Panc1 (cell line): ENCODE measurements at regions of chr6 and their contacts with region 1.

Region 1: DNA sequence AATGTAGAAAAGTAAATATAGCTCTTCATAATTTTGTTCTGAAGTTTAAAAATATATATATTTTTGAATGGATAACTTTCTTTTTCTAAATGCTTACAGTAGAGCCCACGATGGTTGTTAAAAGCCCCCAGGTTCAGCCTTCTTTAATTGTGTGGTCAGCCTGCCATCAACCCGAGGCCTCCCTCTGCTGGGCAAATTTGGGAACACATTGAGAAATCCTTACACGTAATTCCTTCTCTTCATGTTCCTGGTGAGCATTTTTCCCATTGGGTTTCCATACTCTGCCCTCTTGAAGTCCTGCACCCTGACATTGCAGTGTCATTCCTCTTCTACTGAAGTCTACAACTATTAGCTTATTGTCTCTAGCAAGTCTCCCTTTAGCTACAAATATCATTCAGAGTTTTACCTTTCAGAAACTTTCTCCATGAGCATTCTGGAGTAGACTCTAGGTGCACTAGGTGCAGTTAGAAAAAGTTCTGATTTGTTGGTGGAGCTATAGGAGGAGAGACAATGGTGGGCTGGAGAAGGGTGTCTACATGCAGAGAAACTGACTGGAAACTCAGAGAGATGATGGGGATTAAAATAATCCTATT is 40.6 kb downstream of the TRIM38 start:
- DNase-seq: peak; percentile 38
- ATAC-seq: peak; percentile 86
- H3K4me3 ChIP-seq: no peak overlapping the region
- H3K27ac ChIP-seq: no peak overlapping the region
- H3K4me1 ChIP-seq: no peaks in the 10 kb centered on the region
- H3K27me3 ChIP-seq: no peaks in the 10 kb centered on the region
- CTCF ChIP-seq: peak; percentile 93

Region 2: GRCh38 chr6:25788305-25788922 is 214.8 kb before region 1 on chr6:
- CTCF ChIA-PET with region 1: interaction called, 3 read pairs
- POLR2A ChIA-PET with region 1: no interaction called
- in situ Hi-C with region 1: no loop called
- intact Hi-C with region 1: loop called (anchors 10 kb)
- DNase-seq: peak; percentile 28
- ATAC-seq: peak; percentile 79
- H3K4me3 ChIP-seq: no peak overlapping the region
- H3K27ac ChIP-seq: no peak overlapping the region
- H3K4me1 ChIP-seq: no peaks in the 10 kb centered on the region
- H3K27me3 ChIP-seq: no peaks in the 10 kb centered on the region
- CTCF ChIP-seq: peak; percentile 69

Region 3: DNA sequence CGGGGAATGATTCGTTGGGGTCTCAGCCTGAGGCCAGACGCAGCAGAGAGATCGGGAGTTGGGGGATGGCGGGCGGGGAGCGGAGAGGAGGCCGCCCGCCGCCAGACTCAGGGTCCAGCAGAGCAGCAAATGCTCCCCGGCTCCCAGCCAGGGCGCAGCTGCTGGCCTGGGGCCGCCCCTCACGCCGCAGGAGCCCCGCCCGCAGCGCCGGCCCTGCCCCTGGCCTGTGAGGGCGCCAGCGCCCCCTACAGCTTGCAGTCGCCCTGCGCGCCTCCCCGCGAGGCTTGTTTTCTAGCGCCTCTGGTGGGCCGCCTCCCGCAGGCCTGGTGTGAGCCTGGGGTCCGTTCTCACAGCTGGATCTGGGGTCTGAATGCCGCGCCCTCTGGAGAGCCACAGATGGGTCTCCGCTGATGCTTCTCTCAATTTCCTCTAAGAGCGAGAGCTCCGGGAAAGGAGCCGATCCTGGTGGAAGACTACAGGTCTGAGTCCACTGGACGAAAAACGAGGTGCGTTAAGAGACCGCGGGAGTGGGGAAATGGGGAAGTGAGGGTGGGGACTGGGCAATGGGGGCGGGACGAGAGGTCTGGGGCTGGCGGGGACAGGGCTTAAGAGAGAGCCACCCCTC is 10.7 kb before region 1 on chr6:
- CTCF ChIA-PET with region 1: interaction called, 12 read pairs
- POLR2A ChIA-PET with region 1: no interaction called
- in situ Hi-C with region 1: no loop called
- intact Hi-C with region 1: no loop called
- DNase-seq: peak; percentile 73
- ATAC-seq: peak; percentile 96
- H3K4me3 ChIP-seq: peak overlapping the region; percentile 60 to 82
- H3K27ac ChIP-seq: peak overlapping the region; percentile 96
- H3K4me1 ChIP-seq: peaks cover 12% of the 10 kb centered on the region
- H3K27me3 ChIP-seq: no peaks in the 10 kb centered on the region
- CTCF ChIP-seq: peak; percentile 100

Region 4: GRCh38 chr6:26031595-26032339 is 28.6 kb after region 1 on chr6:
- CTCF ChIA-PET with region 1: no interaction called
- POLR2A ChIA-PET with region 1: interaction called, 10 read pairs
- in situ Hi-C with region 1: no loop called
- intact Hi-C with region 1: no loop called
- DNase-seq: peak; percentile 98
- ATAC-seq: peak; percentile 77
- H3K4me3 ChIP-seq: peak overlapping the region; percentile 84 to 91
- H3K27ac ChIP-seq: peak overlapping the region; percentile 100
- H3K4me1 ChIP-seq: peaks cover 42% of the 10 kb centered on the region
- H3K27me3 ChIP-seq: no peaks in the 10 kb centered on the region
- CTCF ChIP-seq: no peak; the same call in 1 of the 2 replicates